Activated T-helper 2 cell treated with anti-CD3 and anti-CD28 coated beads, Interferon-gamma antibody, Interleukin-2, Interleukin-4, amounts not matched to agents 10 μg/mL and 5 μg/mL and 100 μg/mL, durations not matched to agents 14 hours and 24 hours and 36 hours (primary cell): ENCODE measurements at regions of chr5 and their contacts with region 1.

Region 1: DNA sequence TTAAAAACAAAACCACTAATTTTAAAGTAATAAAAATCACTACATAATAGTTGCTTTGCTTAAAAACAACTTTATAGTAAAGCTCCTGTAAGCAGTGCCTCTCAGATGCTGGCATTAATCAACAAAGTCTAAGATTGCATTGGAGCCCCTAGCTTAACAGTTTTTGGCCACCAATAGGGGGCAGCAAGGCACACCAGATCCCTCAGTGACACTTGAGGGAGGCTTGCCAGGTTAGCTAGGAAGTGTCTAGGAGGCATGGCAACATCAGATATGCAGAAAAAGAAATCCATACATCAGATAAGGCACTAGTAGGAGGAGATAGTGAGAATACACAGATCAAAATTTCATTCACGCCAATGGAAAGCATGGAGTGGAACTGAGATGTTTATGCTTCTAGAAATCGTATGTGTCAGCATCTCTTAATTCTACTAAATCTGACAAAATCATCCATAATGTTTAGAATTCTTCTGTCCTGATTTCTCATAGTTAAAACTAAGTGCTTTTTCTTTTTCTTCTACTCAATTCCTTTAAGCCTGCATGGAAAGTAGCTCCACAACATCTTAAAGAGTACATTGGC is 73.6 kb upstream of the PAM start:
- DNase-seq: peak; percentile 23
- H3K4me3 Mint-ChIP-seq: no peak overlapping the region
- H3K27ac Mint-ChIP-seq: no peak overlapping the region
- H3K4me1 Mint-ChIP-seq: no peaks in the 10 kb centered on the region
- H3K27me3 Mint-ChIP-seq: peaks cover 8% of the 10 kb centered on the region

Region 2: GRCh38 chr5:102754767-102755431 is 73.4 kb after region 1 on chr5 and contains the start of gene PAM:
- intact Hi-C with region 1: no loop called
- DNase-seq: peak; percentile 69
- H3K4me3 Mint-ChIP-seq: peak within 1 kb of the TSS; percentile 98
- H3K27ac Mint-ChIP-seq: peak within 1 kb of the TSS; percentile 95
- H3K4me1 Mint-ChIP-seq: peaks cover 31% of the 10 kb centered on the region
- H3K27me3 Mint-ChIP-seq: peaks cover 12% of the 10 kb centered on the region
- total RNA-seq, gene PAM: 48.0 and 59.9 TPM in 2 replicates

Region 3: DNA sequence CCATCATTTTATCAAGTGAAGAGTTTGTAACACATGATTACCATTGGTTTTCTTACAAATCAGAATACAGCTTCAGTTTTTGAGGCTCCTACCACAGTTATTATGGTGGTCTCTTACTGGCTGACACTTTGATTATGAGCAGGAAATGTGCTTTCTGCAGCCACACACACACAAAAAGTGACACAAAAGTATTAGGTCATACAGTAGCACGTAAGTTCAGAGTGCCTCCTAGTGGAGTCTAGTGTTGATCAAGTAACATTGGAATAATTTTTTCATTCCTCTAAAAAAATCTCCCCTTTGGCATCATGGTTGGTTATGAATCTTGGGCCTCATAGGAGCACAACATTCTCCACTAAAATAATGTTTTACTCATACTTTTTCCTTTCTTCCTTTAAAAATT is 111.2 kb after region 1 on chr5:
- intact Hi-C with region 1: loop called (anchors 1 kb)
- DNase-seq: no peak
- H3K4me3 Mint-ChIP-seq: no peak overlapping the region
- H3K27ac Mint-ChIP-seq: no peak overlapping the region
- H3K4me1 Mint-ChIP-seq: peaks cover 8% of the 10 kb centered on the region
- H3K27me3 Mint-ChIP-seq: no peaks in the 10 kb centered on the region

Region 4: GRCh38 chr5:102971697-102972293 is 290.3 kb after region 1 on chr5:
- intact Hi-C with region 1: loop called (anchors 10 kb)
- DNase-seq: no peak
- H3K4me3 Mint-ChIP-seq: no peak overlapping the region
- H3K27ac Mint-ChIP-seq: no peak overlapping the region
- H3K4me1 Mint-ChIP-seq: peaks cover 8% of the 10 kb centered on the region
- H3K27me3 Mint-ChIP-seq: no peaks in the 10 kb centered on the region

Region 5: DNA sequence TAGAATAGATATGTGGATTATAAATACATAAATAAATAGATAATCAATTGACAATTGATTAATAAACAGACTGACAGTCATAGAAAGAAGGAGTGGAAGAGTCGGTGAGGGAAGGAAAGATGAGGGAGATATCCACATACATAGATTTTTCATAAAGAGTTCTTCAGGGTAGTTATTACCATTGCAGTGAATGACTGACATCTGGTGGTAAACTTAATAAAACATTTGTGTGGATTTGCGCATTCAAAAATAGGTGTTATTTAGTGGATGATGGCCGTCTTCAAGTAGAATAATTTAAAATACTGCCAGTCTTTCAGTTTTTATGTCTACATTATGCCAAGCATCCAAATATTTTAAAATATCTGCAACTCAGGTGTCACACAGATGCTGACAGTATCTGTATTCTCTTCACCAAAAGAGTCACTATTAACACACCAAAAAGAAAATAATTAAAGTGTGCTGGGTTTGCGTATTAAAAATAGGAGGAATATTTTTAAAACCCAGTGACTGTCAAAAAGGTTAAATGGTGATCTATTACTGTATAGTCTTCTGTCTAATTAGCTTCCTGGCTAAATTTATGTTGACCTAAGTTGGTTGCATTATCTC is 359.7 kb after region 1 on chr5:
- intact Hi-C with region 1: loop called (anchors 2 kb)
- DNase-seq: no peak
- H3K4me3 Mint-ChIP-seq: no peak overlapping the region
- H3K27ac Mint-ChIP-seq: no peak overlapping the region
- H3K4me1 Mint-ChIP-seq: no peaks in the 10 kb centered on the region
- H3K27me3 Mint-ChIP-seq: peaks cover 17% of the 10 kb centered on the region